Naive thymus-derived CD8-positive, alpha-beta T cell (primary cell): ENCODE measurements at regions of chr11 and their contacts with region 1.

Region 1: DNA sequence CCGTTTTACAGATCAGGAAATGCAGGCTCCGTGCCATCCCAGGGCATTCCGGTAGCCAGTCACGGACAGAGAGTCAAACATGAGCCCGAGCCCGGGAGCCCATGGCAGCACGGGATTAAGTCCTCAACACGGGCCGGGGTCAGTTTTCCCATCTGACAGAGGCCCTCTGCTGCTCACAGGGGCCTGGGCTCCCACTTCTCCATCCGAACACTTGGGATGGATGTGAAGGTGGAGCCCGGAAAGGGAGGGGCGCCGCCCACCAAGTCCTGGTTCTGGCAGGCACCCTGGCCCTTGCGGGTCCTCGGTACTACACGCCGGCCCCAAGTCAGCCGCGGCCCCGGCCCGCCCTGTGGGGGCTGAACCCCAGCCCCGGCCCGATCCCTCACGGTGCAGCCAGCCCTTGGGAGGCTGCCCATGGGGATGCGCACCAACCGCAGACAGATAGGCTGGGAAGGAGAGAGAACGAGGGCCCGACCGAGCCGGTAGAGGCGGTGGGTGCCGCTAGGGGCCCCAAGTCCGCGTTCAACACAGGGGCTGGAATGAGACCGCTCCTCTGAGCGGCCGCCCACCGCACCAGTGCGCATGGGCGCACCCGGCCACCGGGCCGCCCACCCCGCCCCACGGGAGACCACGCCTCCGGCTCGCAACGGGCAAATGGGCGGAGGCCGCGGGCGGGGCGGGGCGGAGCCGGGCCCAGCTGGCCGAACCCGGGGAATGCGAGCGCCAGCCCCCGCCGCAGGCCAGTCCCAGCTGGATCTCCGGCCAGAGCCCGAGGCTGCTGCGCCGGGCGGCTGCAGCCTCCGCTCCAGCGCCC is at the start of gene CAPN5:
- DNase-seq: peak; percentile 80 to 96 (median 86)
- ATAC-seq: peak; percentile 84 to 90
- H3K4me3 Mint-ChIP-seq: peak within 1 kb of the TSS; percentile 81 to 96 (median 90)
- H3K27ac Mint-ChIP-seq: peak within 1 kb of the TSS; percentile 59 to 94 (median 92)
- H3K4me1 Mint-ChIP-seq: peaks cover 17 to 42% (median 31%) of the 10 kb centered on the region in 4 donors
- H3K27me3 Mint-ChIP-seq: no peaks in the 10 kb centered on the region
- polyA plus RNA-seq, gene CAPN5: 6.2 to 13.1 (median 7.5) TPM

Region 2: GRCh38 chr11:77082838-77083562 is 16.6 kb after region 1 on chr11:
- POLR2A ChIA-PET with region 1: interaction called, 25 read pairs
- DNase-seq: peak in 9 of 10 donors; percentile 18 to 79 (median 48)
- ATAC-seq: peak; percentile 94 to 95
- H3K4me3 Mint-ChIP-seq: peak overlapping the region; percentile 73 to 89 (median 86)
- H3K27ac Mint-ChIP-seq: peak overlapping the region; percentile 96 to 99 (median 98)
- H3K4me1 Mint-ChIP-seq: peaks cover 16 to 42% (median 25%) of the 10 kb centered on the region in 4 donors
- H3K27me3 Mint-ChIP-seq: no peaks in the 10 kb centered on the region

Region 3: GRCh38 chr11:77091146-77091940 is 24.9 kb after region 1 on chr11:
- POLR2A ChIA-PET with region 1: interaction called, 17 read pairs
- DNase-seq: peak; percentile 63 to 90 (median 73)
- ATAC-seq: peak; percentile 98 to 100
- H3K4me3 Mint-ChIP-seq: no peak overlapping the region
- H3K27ac Mint-ChIP-seq: no peak overlapping the region
- H3K4me1 Mint-ChIP-seq: peaks cover 2 to 7% (median 3%) of the 10 kb centered on the region in 4 donors
- H3K27me3 Mint-ChIP-seq: no peaks in the 10 kb centered on the region

Region 4: DNA sequence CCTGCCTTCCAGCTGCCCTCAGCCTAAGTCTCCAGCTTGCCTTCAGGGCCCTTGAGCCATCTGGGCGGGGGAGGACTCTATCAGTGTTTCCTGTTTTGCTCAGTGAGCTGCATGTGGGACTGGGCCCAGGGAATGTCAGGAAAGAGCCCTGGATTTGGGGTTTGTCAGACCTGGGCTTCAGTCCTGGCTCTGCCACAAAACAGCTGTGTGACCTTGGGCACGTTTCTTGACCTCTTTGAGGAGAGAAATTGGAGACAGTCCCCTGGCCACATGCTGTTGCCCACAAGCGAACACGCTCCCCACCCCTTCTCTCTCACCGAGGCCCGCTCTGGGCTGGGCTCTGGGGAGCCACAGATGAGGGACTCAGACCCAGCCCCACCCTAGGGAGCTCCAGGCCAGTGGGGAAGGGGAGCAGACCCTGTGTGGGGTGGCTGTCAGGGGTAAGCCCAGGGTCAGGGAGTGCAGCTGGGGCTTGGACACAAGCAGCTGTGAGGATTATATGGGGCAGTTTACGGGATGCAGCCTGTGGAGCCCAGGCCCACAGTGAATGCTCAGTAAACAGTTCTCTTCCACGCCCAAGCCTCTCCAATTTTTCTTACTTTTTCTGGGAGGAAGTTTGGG is 73.9 kb after region 1 on chr11:
- POLR2A ChIA-PET with region 1: no interaction called
- DNase-seq: no peak
- ATAC-seq: no peak
- H3K4me3 Mint-ChIP-seq: no peak overlapping the region
- H3K27ac Mint-ChIP-seq: peak overlapping the region in 1 of 10 donors; percentile 6
- H3K4me1 Mint-ChIP-seq: peaks cover 14 to 33% (median 20%) of the 10 kb centered on the region in 4 donors
- H3K27me3 Mint-ChIP-seq: peaks cover 6 to 33% (median 20%) of the 10 kb centered on the region in 5 donors